ENCODE measurements at regions of chr2 and their contacts with region 1.

Region 1: GRCh38 chr2:231662028-231662810 is 46.1 kb upstream of the PTMA start:
- DNase-seq: peak; percentile 93 to 99 (median 99)
- H3K4me3 ChIP-seq: peak overlapping the region; percentile 43 to 60
- H3K4me3 Mint-ChIP-seq: peak overlapping the region; percentile 75 to 86 (median 80)
- H3K27ac ChIP-seq: peak overlapping the region; percentile 86
- H3K27ac Mint-ChIP-seq: peak overlapping the region; percentile 90 to 99 (median 97)
- H3K4me1 ChIP-seq: peaks cover 14% of the 10 kb centered on the region
- H3K4me1 Mint-ChIP-seq: peaks cover 5 to 23% (median 13%) of the 10 kb centered on the region in 4 donors
- H3K27me3 ChIP-seq: no peaks in the 10 kb centered on the region
- H3K27me3 Mint-ChIP-seq: no peaks in the 10 kb centered on the region

Region 2: GRCh38 chr2:231212329-231212845 is 449.8 kb before region 1 on chr2:
- CTCF ChIA-PET with region 1: no interaction called
- POLR2A ChIA-PET with region 1: no interaction called
- intact Hi-C with region 1: no loop called
- DNase-seq: no peak
- H3K4me3 ChIP-seq: no peak overlapping the region
- H3K4me3 Mint-ChIP-seq: no peak overlapping the region
- H3K27ac ChIP-seq: no peak overlapping the region
- H3K27ac Mint-ChIP-seq: no peak overlapping the region
- H3K4me1 ChIP-seq: no peaks in the 10 kb centered on the region
- H3K4me1 Mint-ChIP-seq: no peaks in the 10 kb centered on the region
- H3K27me3 ChIP-seq: no peaks in the 10 kb centered on the region
- H3K27me3 Mint-ChIP-seq: peaks cover 0 to 2% of the 10 kb centered on the region in 2 donors

Region 3: DNA sequence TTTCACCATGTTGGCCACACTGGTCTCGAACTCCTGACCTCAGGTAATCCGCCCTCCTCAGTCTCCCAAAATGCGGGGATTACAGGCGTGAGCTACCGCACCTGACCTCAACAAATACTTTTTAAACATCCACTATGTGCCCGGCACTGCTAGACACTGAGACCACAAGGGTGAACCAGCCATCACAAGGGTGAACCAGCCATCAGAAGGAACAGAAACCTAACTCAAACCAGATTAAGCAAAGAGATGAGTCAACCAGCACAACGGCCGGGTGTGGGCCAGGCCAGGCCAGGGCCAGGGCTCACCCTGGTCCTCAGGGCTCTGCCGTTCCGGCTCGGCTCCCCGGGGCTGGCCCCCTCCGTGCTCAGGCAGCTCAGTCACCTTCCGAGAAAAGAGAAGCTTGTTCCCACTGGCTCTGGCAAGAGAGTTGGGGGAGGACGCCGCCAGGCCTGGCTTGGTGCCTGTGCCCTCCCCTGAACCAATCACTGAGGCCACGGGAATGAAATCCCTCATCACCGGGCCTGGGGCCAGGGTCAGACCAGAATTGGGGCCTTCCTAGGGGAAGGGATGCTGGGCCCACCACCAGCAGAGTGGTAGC is 65.1 kb before region 1 on chr2:
- CTCF ChIA-PET with region 1: no interaction called
- POLR2A ChIA-PET with region 1: no interaction called
- intact Hi-C with region 1: no loop called
- DNase-seq: no peak
- H3K4me3 ChIP-seq: no peak overlapping the region
- H3K4me3 Mint-ChIP-seq: no peak overlapping the region
- H3K27ac ChIP-seq: no peak overlapping the region
- H3K27ac Mint-ChIP-seq: no peak overlapping the region
- H3K4me1 ChIP-seq: no peaks in the 10 kb centered on the region
- H3K4me1 Mint-ChIP-seq: peaks cover 2 to 6% (median 4%) of the 10 kb centered on the region in 4 donors
- H3K27me3 ChIP-seq: no peaks in the 10 kb centered on the region
- H3K27me3 Mint-ChIP-seq: no peaks in the 10 kb centered on the region

Region 4: DNA sequence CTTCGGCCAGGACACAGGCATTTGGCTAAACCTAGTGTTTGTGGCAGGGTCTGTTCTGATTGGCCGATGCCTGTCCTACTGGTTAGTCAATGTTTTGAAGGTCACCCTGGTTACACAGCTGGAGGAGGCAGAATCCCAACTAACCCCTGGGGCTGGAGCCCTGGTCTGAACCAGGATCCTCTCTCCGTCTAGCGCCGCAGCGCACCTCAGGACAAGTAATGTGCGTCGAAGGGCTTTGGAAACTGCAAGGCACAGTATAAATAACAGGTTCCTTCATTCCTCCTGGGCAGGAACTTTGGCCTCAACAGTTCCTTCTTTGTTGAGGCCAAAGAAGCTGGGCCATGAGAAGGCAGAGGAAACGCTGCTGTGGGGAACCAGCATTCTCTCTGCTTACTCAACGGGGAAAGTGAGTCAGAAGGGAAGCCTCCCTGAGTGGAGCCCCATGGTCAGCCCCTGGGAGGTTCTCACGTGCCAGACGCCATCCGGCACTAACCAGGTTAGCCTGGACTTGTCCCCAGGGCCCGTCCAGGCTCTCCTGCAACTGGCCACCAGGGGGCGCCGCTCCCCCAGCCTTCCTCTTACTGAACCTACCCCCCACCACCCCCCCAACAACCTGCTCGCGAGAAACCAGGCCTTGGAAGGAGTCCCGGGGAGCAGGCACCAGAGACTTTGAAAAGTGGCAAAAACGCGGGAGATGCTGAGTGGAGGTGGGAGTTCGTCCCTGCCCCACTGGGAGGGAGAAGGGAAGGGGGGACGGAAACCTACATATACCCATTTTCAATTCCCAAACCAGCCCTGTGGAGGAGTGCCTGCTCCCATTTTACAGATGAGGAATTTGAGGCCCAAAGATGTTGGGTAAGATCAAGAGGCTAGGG is 49.8 kb before region 1 on chr2:
- CTCF ChIA-PET with region 1: interaction called, 6 read pairs
- POLR2A ChIA-PET with region 1: interaction called, 41 read pairs
- intact Hi-C with region 1: loop called (anchors 1 kb)
- DNase-seq: peak; percentile 81 to 88 (median 83)
- H3K4me3 ChIP-seq: peak overlapping the region in 1 of 2 donors; percentile 62
- H3K4me3 Mint-ChIP-seq: peak overlapping the region; percentile 71 to 96 (median 87)
- H3K27ac ChIP-seq: peak overlapping the region; percentile 65
- H3K27ac Mint-ChIP-seq: peak overlapping the region; percentile 88 to 96 (median 93)
- H3K4me1 ChIP-seq: peaks cover 23% of the 10 kb centered on the region
- H3K4me1 Mint-ChIP-seq: peaks cover 18 to 41% (median 28%) of the 10 kb centered on the region in 4 donors
- H3K27me3 ChIP-seq: no peaks in the 10 kb centered on the region
- H3K27me3 Mint-ChIP-seq: no peaks in the 10 kb centered on the region

Measured in CD4-positive, alpha-beta memory T cell (primary cell).